Aorta (tissue), 5 donors: ENCODE measurements at regions of chr9 and their contacts with region 1.

Region 1: DNA sequence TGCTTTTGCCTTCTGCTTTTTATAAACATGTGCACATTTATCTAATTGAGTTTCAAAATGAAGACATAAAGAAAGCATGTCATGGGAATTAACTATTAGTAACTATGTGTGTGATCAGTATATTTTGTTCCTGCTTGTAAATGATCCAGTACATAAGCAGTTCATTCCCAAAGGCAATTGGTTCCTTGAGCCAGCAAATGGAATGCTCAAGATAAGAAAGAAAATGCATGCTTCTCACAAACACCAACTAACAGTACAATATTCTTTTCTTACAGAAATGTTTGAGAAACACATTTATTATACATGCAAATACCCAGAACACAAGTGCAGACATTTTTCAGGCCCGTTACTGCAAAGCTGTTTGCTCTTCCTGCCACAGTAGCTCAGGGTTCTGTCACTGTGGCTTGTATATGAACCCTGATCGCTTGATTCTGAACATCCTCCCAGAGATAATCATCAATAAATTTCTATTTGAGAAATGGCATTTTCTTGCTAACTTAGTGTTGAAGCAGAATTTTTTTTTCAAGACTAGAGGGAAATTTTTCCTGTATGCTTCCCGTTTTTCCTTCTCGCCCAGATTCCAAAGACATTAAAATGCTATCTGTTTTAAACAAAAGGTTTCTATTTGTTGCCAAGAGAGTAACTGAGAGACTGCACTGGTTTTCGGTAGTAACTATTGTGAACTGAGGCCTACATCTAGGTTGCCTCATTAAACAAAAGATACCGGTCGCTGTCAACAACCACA is 1.9 kb downstream of the GNAQ start:
- DNase-seq: no peak
- ATAC-seq: no peak
- H3K4me3 ChIP-seq: peak overlapping the region; percentile 89 to 100
- H3K27ac ChIP-seq: peak overlapping the region; percentile 25 to 29
- H3K4me1 ChIP-seq: peaks cover 0 to 2% of the 10 kb centered on the region in 2 donors
- H3K27me3 ChIP-seq: no peaks in the 10 kb centered on the region

Region 2: GRCh38 chr9:77833561-77834429 is 195.9 kb before region 1 on chr9:
- intact Hi-C with region 1: loop called in 1 of 2 experiments (anchors 5 kb)
- DNase-seq: no peak
- ATAC-seq: no peak
- H3K4me3 ChIP-seq: no peak overlapping the region
- H3K27ac ChIP-seq: peak overlapping the region in 1 of 2 donors; percentile 67
- H3K4me1 ChIP-seq: peaks cover 0 to 8% of the 10 kb centered on the region in 2 donors
- H3K27me3 ChIP-seq: no peaks in the 10 kb centered on the region

Region 3: DNA sequence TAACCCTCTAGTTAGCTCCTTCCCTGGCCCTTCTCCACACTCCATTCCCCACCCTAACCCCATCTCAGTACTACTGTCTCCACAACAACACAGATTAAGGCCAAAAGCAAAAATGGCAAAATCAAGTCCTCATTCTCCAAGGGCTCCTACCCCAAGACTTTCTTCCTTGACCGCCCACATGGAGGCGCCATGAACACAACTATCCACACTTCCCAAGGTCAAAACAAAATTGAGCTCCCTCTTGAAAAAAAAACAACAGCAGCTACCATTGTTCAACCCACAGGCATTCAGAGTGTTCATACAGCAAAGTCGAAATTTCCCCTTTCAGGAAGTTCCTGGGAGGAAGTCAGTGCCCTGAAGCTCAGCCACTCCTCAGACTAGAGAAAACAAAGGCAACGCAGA is 52.5 kb before region 1 on chr9:
- intact Hi-C with region 1: loop called in 1 of 2 experiments (anchors 5 kb)
- DNase-seq: peak in 1 of 2 donors; percentile 74
- ATAC-seq: peak; percentile 82
- H3K4me3 ChIP-seq: no peak overlapping the region
- H3K27ac ChIP-seq: no peak overlapping the region
- H3K4me1 ChIP-seq: peaks cover 0 to 10% of the 10 kb centered on the region in 2 donors
- H3K27me3 ChIP-seq: no peaks in the 10 kb centered on the region